Activated naive CD4-positive, alpha-beta T cell treated with anti-CD3 and anti-CD28 coated beads for 36 hours (primary cell): ENCODE measurements at regions of chr17 and their contacts with region 1.

Region 1: DNA sequence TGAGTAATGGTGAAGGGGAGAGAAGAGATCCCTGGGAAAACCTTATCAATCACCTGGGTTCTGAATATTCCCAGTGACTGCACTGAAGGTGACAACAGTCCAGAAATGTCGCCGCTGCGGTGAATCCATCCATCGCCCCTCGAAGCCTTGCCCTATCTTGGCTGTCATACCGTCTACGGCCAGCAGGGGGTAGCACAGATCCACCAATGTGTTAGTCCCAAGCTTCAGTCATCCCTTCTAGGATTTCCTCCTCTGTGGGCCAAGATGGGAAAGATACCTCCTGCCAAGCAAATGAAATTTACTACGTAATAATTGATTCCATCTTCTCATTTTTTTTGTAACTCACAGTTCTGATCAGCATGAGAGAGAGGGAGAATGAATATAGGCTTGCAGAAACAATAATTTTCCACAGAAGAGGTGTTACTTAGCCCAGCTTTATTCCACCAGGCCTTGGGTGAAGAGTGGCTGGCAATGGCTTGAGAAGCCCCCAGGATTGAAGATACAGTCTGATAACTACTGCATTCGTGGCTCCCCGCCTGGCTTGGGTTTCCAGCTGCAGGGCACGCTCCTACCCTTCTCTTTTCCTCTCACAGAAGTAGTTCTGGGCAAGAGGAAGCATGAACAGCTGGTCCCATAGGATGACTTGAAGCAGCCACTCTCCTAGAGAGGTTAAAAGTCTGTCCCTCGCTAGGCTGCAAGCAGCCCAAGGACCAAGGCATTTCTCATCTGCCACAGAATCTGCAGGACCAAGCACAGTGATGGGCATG is 2.6 kb upstream of the FMNL1 start:
- DNase-seq: peak; percentile 95
- H3K4me3 Mint-ChIP-seq: peak overlapping the region; percentile 86
- H3K27ac Mint-ChIP-seq: peak overlapping the region; percentile 88
- H3K4me1 Mint-ChIP-seq: peaks cover 26% of the 10 kb centered on the region
- H3K27me3 Mint-ChIP-seq: no peaks in the 10 kb centered on the region

Region 2: DNA sequence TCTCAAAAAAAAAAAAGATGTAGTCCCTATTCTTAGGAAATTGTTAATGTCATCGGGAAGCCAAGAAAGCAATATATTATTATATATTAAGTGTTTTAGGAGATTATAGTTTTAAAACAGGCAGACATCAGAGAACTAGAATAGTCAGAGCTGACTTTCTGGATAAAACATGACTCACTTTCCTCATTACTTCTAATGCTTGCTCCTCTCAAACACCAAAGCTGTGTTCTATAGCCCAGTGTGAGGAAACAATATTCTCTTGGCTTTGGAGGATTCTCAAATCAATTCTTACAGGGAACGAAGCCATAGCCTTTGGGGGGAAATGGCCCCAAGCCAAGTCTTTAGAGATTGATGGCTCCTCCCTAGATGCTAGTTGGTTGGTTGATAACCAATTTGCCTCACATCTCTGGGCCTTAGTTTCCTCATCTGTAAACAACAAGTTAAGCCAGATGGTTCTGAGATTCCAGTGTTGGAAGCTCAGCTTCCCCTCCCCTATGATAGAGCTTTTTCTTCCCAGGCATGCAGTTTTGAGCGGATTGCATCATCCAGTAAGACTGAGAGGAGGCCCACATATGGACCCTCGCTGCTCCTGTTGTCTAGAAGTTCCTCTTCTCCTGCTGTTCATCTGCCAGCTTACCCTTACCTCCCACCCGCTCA is 145.5 kb before region 1 on chr17:
- CTCF ChIA-PET with region 1: no interaction called
- intact Hi-C with region 1: no loop called
- DNase-seq: no peak
- H3K4me3 Mint-ChIP-seq: no peak overlapping the region
- H3K27ac Mint-ChIP-seq: peak overlapping the region; percentile 42
- H3K4me1 Mint-ChIP-seq: peaks cover 30% of the 10 kb centered on the region
- H3K27me3 Mint-ChIP-seq: no peaks in the 10 kb centered on the region

Region 3: GRCh38 chr17:45235416-45236281 is 16.6 kb after region 1 on chr17:
- CTCF ChIA-PET with region 1: interaction called, 412 read pairs
- intact Hi-C with region 1: loop called (anchors 1 kb)
- DNase-seq: peak; percentile 89
- H3K4me3 Mint-ChIP-seq: no peak overlapping the region
- H3K27ac Mint-ChIP-seq: peak overlapping the region; percentile 89
- H3K4me1 Mint-ChIP-seq: peaks cover 50% of the 10 kb centered on the region
- H3K27me3 Mint-ChIP-seq: no peaks in the 10 kb centered on the region

Region 4: DNA sequence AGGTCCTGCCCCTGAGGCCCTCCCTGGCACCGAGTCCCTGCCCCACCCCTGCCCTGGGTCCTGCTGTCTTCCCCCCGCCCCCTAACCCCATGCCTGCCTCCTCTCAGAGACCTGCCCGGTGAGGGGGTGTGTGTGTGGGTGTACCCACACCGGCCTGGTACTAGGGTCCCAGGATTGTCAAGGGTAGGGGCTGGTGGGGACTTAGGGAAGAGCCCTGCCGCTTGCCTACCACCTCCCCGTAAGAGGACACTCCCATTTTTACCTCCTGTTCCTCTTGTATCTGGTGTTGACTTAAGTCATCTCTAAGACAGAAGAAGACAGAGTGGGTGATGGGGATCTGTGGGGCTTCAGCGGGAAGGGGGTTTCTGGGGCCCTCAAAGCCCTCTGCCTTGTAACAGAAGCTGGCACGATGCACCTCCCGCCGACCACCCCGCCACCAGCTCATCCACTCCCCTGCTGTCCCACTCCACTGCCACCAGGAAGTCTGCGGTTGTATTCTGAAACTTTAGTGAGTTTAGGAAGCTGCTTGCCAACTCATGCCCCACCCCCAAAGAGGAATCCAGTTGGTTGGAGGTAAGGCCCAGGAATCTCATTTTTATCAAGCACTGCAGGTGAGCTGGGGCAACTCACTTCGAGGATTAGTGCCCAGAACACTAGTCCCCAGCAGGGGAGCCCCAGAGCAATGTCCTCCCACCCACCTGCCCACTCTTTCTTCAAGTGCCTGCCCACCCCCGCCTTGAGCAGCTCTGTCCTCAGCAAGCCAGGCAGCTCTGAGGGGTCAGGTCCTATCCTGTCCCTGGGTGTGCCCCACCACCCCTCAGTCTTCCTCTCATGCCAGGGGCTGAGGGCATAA is 37.3 kb after region 1 on chr17:
- CTCF ChIA-PET with region 1: interaction called, 27 read pairs
- intact Hi-C with region 1: no loop called
- DNase-seq: no peak
- H3K4me3 Mint-ChIP-seq: no peak overlapping the region
- H3K27ac Mint-ChIP-seq: no peak overlapping the region
- H3K4me1 Mint-ChIP-seq: peaks cover 51% of the 10 kb centered on the region
- H3K27me3 Mint-ChIP-seq: no peaks in the 10 kb centered on the region

Region 5: DNA sequence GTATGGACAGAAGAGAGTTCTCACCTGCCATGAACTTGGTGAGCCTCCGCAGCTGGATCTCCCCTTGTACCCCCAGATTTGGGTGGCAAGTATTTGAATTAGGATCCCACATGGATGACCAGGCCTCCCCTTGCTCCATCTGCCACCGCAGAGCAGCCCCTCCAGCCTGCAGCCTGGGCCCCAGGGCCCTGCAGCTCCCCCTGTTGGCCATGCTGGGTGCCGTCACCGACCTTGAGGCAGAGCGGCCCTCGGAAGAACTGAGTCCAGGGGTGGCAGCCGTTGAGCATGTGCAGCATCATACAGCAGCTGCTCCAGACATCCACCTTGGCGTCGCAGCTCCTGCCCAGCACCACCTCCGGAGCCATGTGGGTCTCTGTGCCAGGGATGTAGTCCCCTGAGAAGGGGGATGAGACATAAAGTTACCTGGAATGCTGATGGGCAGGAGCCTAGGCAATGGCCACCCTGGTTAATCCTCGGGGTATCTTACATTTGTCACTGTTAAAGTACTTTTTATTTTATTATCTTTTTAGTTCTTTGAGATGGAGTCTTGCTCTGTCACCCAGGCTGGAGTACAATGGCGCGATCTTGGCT is 51.8 kb after region 1 on chr17:
- CTCF ChIA-PET with region 1: interaction called, 29 read pairs
- intact Hi-C with region 1: loop called (anchors 1 kb)
- DNase-seq: peak; percentile 64
- H3K4me3 Mint-ChIP-seq: no peak overlapping the region
- H3K27ac Mint-ChIP-seq: peak overlapping the region; percentile 41
- H3K4me1 Mint-ChIP-seq: peaks cover 14% of the 10 kb centered on the region
- H3K27me3 Mint-ChIP-seq: no peaks in the 10 kb centered on the region

Region 6: GRCh38 chr17:45385331-45385997 is 166.4 kb after region 1 on chr17:
- CTCF ChIA-PET with region 1: interaction called, 31 read pairs
- intact Hi-C with region 1: loop called (anchors 1 kb)
- DNase-seq: peak; percentile 94
- H3K4me3 Mint-ChIP-seq: no peak overlapping the region
- H3K27ac Mint-ChIP-seq: no peak overlapping the region
- H3K4me1 Mint-ChIP-seq: peaks cover 13% of the 10 kb centered on the region
- H3K27me3 Mint-ChIP-seq: no peaks in the 10 kb centered on the region